GM12878 (cell line): ENCODE measurements at regions of chr4 and their contacts with region 1.

Region 1: GRCh38 chr4:88230969-88231771 is 53.2 kb downstream of the PPM1K start:
- DNase-seq: no peak
- ATAC-seq: no peak
- H3K4me3 ChIP-seq: no peak overlapping the region
- H3K27ac ChIP-seq: no peak overlapping the region
- H3K4me1 ChIP-seq: no peaks in the 10 kb centered on the region
- H3K27me3 ChIP-seq: no peaks in the 10 kb centered on the region
- CTCF ChIP-seq: no peak
- EP300 ChIP-seq: no peak
- POLR2A ChIP-seq: no peak
- RAD21 ChIP-seq: no peak

Region 2: DNA sequence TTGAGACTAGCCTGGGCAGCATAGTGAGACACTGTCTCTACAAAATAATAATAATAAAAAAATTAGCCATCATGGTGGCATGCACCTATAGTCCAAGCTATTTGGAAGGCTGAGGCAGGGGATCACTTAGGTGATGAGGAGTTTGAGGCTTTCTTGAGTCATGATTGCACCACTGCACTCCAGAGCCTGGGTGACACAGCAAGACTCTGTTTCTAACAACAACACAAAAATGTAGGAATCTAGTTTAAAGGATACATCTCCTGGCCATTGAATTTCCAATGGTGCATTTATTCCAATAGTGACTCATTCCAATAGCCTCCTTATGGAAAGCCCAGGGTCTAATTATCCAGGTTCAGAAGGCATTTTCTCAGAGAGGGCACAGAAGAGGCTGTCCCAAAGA is 125.6 kb after region 1 on chr4:
- CTCF ChIA-PET with region 1: no interaction called
- POLR2A ChIA-PET with region 1: no interaction called
- RAD21 ChIA-PET with region 1: no interaction called
- SMC1A ChIA-PET with region 1: no interaction called
- in situ Hi-C with region 1: no loop called
- intact Hi-C with region 1: loop called (anchors 5 kb)
- DNase-seq: no peak
- ATAC-seq: no peak
- H3K4me3 ChIP-seq: no peak overlapping the region
- H3K27ac ChIP-seq: no peak overlapping the region
- H3K4me1 ChIP-seq: no peaks in the 10 kb centered on the region
- H3K27me3 ChIP-seq: no peaks in the 10 kb centered on the region
- CTCF ChIP-seq: no peak
- EP300 ChIP-seq: no peak
- POLR2A ChIP-seq: no peak
- RAD21 ChIP-seq: no peak